ENCODE measurements at regions of chr14 and their contacts with region 1.

Region 1: GRCh38 chr14:72023722-72024407 is 91.6 kb downstream of the RGS6 start:
- DNase-seq: no peak
- ATAC-seq: peak; percentile 53

Region 2: GRCh38 chr14:72291908-72292688 is 268.2 kb after region 1 on chr14:
- intact Hi-C with region 1: loop called (anchors 2 kb)
- DNase-seq: no peak
- ATAC-seq: peak; percentile 81

Region 3: DNA sequence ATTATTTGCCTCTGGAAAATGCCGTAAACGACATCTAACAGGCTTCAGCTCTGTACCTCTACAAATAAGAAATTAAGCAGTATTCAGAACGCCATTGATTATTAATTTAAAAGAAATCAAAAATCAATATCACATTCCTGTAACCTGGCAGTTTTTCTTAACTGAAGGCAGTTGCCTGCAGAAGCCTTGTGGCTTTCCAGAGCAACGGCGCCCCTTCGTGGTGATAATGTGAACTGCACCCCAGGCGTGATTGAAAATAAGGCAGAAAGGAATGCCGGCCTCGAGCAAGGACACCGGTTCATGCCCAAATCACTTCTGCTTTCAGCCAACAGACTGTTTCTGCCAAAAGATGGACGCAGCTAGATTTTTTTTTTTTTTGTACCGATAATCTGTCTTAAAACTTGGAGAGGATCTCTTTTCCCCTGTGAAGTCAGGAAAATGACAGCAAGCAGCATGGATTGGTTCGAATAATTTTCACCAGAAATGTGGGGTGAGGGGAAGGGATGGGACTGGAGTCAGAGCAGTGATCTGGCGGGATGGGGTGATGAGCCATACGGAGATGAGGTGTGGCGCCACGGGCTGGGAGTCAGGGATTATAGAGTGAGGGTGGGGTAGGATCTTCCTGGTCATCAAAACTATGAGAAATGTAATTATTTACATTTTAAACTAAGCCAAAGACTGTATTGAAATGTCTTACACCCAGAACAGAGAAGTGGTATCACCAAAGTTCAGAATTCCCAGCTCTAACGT is 397.0 kb after region 1 on chr14:
- intact Hi-C with region 1: loop called (anchors 2 kb)
- DNase-seq: peak; percentile 74
- ATAC-seq: no peak